GM10248 (cell line): ENCODE measurements at regions of chr6 and their contacts with region 1.

Region 1: DNA sequence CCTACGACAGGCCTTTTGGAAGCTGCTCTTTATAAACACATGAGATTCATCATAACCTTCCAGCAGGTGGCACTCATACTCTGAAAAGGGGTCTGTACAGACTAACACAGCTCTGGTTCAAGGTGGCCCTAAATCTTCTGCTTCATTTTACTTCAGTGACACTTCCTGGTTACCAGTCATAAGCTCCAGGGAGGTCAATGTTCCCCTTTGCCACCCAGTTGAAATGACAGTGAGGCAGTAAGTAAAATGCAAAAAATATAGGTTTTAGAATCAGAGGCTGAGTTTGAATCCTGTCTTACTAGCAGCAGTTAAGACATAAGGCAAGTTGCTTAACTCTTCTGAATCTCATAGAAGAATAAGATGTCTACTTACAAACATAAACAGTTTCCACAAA is 132.8 kb downstream of the CDK19 start:
- DNase-seq: peak; percentile 70
- CTCF ChIP-seq: peak; percentile 61

Region 2: DNA sequence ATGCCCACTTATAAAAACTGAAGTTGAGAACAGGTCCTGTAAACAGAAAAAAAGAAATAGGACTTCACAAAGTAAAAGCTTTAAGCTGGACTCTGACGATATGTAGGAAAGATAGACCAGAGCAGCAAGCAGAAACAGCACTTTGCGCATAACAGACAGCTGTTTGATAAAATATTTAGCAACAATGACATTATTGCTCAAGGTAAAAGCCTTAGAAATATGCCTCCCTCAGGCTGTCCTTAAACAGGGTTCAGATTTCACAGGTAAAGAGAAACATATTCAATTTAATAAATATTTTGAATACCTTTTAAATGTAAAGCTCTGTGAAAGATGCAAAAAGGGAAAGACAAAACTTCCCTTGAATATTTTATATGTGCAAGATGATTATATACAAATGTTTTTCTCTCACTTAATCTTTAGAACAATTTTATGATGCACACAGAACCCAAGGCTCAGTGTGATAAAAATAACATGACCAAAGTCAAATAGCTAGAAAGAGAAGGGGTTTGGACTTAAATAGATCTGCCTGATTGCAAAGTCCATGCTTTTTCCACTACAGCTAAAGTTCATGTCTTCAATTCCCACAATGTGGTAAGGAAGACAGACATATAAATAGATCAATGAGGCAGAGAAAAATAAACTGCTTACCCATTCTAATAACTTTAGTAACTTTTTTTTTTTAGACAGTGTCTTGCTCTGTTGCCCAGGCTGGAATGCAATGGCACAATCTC is 11.2 kb before region 1 on chr6:
- CTCF ChIA-PET with region 1: interaction called, 15 read pairs
- POLR2A ChIA-PET with region 1: no interaction called
- DNase-seq: no peak
- CTCF ChIP-seq: no peak

Region 3: GRCh38 chr6:110864824-110865223 is 182.4 kb after region 1 on chr6:
- CTCF ChIA-PET with region 1: interaction called, 11 read pairs
- POLR2A ChIA-PET with region 1: no interaction called
- DNase-seq: no peak
- CTCF ChIP-seq: no peak

Region 4: DNA sequence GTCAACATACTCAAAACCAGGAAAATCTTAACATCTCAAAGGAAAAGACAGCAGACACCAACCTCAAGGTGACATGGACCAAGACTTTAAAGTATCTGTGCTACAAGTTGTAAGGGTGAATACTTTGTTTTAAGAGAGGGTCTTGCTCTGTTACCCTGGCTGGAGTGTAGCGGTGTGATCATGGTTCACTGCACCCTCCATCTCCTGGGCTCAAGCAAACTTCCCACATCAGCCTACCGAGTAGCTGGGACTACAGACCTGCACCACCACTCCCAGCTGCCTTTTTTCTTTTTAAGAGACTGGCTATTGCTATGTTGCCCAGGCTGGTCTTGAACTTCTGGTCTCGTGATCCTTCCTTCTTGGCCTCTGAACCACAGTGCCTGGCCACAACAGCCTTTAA is 201.9 kb after region 1 on chr6:
- CTCF ChIA-PET with region 1: interaction called, 41 read pairs
- POLR2A ChIA-PET with region 1: interaction called, 6 read pairs
- DNase-seq: no peak
- CTCF ChIP-seq: no peak

Region 5: DNA sequence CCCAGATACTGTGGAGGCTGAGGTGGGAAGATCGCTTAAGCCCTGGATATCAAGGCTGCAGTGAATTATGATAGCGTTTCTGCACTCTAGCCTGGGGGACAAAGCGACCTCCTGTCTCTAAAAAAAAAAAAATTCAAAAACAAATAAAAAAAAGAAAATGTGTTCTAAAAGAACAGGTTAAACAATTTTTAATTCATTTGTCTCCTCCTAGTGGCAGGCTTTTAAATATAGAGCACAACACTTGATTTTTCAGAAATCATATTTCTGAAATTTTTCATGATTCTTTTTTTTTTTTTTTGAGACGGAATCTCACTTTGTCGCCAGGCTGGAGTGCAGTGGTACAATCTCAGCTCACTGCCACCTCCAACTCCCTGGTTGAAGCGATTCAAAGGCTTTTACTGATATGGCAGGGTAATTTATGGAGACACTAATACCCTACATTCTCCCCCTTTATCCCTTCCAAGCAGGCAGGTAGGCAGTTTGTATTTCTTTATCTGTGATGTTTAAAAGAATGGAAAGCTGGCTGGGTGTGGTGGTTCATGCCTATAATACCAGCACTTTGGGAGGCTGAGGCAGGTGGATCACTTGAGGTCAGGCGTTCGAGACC is 267.3 kb after region 1 on chr6:
- CTCF ChIA-PET with region 1: interaction called, 17 read pairs
- POLR2A ChIA-PET with region 1: no interaction called
- DNase-seq: no peak
- CTCF ChIP-seq: peak; percentile 41

Region 6: DNA sequence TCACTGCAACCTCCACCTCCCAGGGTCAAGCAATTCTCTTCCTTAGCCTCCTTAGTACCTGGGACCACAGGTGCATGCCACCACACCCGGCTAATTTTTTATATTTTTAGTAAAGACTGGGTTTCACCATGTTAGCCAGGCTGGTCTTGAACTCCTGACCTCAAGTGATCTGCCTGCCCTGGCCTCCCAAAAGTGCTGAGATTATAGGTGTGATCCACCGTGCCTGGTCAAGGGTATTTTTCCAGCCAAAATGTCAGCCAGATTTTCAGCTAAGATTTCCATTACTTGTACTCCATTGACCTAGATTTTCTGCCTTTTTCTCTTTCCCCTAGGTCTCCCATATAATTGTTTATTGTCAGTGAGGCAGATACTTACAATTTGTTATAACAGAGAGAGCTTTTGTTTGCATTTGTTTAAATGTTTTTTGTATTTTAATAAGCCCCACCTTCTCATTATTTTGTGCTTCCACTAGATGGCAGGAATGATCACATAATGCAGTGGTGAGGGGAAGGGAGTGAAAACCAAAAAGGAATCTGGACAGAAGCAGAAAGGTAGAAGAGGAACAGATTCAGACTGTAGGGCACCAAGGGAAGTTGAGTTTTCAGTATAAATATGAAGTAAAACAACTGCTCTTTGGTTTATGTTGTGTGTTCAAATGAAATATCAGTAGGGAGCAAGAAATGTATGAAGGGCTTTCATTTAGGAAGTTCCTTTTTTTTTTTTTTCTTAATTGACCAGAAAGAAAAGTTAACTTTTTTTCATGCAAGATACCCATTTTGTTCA is 329.1 kb after region 1 on chr6:
- CTCF ChIA-PET with region 1: interaction called, 16 read pairs
- POLR2A ChIA-PET with region 1: no interaction called
- DNase-seq: peak; percentile 58
- CTCF ChIP-seq: peak; percentile 58